CD4-positive, alpha-beta memory T cell (primary cell): ENCODE measurements at regions of chr10 and their contacts with region 1.

Region 1: DNA sequence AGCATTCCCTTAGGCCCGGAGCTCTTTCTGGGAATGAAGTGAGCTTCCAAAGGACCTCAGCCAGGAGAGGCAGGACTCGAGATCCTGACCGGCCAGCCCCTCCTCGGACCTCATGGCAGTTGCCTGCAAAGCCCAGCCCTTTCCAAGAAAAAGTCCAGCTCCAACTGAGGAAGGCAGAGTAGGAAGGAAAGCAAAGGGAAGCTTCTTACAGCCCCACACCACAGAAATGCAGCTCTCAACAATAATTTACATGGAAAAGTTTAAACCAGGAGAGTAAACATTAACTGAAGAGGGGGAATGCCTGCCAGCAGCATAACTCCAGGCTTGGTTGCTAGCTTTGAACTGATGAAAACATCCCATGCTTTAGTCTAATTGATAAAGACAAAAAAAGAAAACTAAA is 153.9 kb upstream of the PFKP start:
- DNase-seq: no peak
- H3K4me3 ChIP-seq: no peak overlapping the region
- H3K4me3 Mint-ChIP-seq: no peak overlapping the region
- H3K27ac ChIP-seq: no peak overlapping the region
- H3K27ac Mint-ChIP-seq: no peak overlapping the region
- H3K4me1 ChIP-seq: no peaks in the 10 kb centered on the region
- H3K4me1 Mint-ChIP-seq: peaks cover 6 to 9% (median 6%) of the 10 kb centered on the region in 4 donors
- H3K27me3 ChIP-seq: no peaks in the 10 kb centered on the region
- H3K27me3 Mint-ChIP-seq: peaks cover 14 to 21% of the 10 kb centered on the region in 2 donors

Region 2: GRCh38 chr10:2856598-2856997 is 56.9 kb before region 1 on chr10:
- CTCF ChIA-PET with region 1: no interaction called
- POLR2A ChIA-PET with region 1: no interaction called
- intact Hi-C with region 1: no loop called
- DNase-seq: no peak
- H3K4me3 ChIP-seq: no peak overlapping the region
- H3K4me3 Mint-ChIP-seq: no peak overlapping the region
- H3K27ac ChIP-seq: no peak overlapping the region
- H3K27ac Mint-ChIP-seq: no peak overlapping the region
- H3K4me1 ChIP-seq: no peaks in the 10 kb centered on the region
- H3K4me1 Mint-ChIP-seq: no peaks in the 10 kb centered on the region
- H3K27me3 ChIP-seq: no peaks in the 10 kb centered on the region
- H3K27me3 Mint-ChIP-seq: peaks cover 4 to 11% of the 10 kb centered on the region in 2 donors

Region 3: GRCh38 chr10:2927958-2928840 is 14.7 kb after region 1 on chr10:
- CTCF ChIA-PET with region 1: interaction called, 10 read pairs
- POLR2A ChIA-PET with region 1: no interaction called
- intact Hi-C with region 1: no loop called
- DNase-seq: peak in 3 of 5 donors; percentile 16 to 24 (median 19)
- H3K4me3 ChIP-seq: no peak overlapping the region
- H3K4me3 Mint-ChIP-seq: peak overlapping the region in 1 of 8 donors; percentile 3
- H3K27ac ChIP-seq: no peak overlapping the region
- H3K27ac Mint-ChIP-seq: no peak overlapping the region
- H3K4me1 ChIP-seq: no peaks in the 10 kb centered on the region
- H3K4me1 Mint-ChIP-seq: peaks cover 0 to 8% (median 7%) of the 10 kb centered on the region in 4 donors
- H3K27me3 ChIP-seq: no peaks in the 10 kb centered on the region
- H3K27me3 Mint-ChIP-seq: peaks cover 9 to 31% of the 10 kb centered on the region in 2 donors